Activated CD4-positive, alpha-beta T cell treated with anti-CD3 and anti-CD28 coated beads, Interleukin-2, amount 10 ng/mL, durations not matched to agents 7 days and 5 days (primary cell): ENCODE measurements at regions of chr11 and their contacts with region 1.

Region 1: DNA sequence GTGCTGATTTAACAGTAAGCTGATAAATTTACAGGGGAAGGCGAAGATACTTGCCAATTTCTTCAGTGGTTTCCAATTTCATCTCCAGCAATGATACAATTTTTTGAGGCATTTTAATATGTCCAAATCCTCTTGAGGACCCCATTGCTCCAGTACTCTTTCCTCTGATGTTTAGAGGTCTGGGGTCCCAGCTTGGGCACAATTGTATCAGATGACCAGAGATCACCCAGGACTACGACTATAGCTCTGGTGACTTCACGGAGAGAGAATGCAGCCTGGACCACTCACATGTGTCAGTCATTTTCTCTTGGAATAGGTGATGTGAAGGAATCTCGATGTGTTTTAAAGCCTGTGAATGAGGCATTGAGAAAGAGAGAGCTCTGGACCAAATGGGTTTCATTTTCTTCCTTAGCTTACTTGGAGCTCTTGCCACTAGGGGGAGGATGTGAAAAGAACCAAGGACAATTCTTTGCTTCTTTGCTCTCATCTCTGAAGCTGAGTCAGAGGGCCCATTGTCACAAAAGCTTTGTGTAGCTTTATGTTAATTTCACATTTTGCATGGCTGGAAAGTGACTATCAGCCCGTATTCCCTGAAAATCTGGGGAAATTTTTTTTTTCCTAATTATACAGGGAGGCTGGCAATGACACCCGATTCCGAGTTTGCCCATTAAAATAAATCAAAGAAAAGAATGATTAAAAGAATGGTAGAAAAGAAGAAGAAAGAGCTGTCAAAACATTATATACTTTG is 6.7 kb upstream of the CCDC90B start:
- DNase-seq: peak; percentile 57
- H3K4me3 Mint-ChIP-seq: peak overlapping the region; percentile 29
- H3K27ac Mint-ChIP-seq: no peak overlapping the region
- H3K4me1 Mint-ChIP-seq: peaks cover 6% of the 10 kb centered on the region
- H3K27me3 Mint-ChIP-seq: peaks cover 7% of the 10 kb centered on the region

Region 2: DNA sequence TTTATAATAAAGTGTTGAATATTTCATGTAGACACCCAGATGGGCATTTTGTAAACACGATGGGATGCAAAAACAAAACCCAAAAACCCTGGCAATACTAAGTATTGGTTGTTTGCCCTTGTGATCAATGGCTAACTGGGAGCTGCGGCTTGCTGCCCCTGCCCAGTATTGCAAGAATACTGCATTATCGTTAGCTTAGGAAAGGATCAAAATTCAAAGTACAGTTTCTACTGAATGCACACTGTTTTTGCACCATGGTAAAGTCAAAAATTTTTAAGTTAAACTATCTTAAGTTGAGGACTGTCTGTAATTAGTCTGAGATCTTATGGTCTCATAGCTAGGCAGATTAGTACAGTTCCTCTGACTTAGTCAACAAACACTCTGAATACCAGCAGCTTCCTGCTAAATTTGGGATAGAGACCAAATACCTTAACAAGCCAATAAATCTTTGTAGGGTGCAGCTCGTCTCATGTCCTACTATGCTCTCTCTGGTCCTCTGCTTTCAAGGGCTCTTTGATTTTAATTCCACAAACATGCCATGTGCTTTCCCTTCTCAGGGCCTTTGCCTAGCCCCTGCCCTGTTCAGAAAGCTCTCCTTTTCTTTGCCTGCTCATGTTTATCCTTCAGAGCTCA is 10.7 kb before region 1 on chr11:
- CTCF ChIA-PET with region 1: interaction called, 15 read pairs
- POLR2A ChIA-PET with region 1: interaction called, 3 read pairs
- DNase-seq: no peak
- H3K4me3 Mint-ChIP-seq: no peak overlapping the region
- H3K27ac Mint-ChIP-seq: no peak overlapping the region
- H3K4me1 Mint-ChIP-seq: peaks cover 36% of the 10 kb centered on the region
- H3K27me3 Mint-ChIP-seq: no peaks in the 10 kb centered on the region